ENCODE measurements at regions of chr1 and their contacts with region 1.

Region 1: DNA sequence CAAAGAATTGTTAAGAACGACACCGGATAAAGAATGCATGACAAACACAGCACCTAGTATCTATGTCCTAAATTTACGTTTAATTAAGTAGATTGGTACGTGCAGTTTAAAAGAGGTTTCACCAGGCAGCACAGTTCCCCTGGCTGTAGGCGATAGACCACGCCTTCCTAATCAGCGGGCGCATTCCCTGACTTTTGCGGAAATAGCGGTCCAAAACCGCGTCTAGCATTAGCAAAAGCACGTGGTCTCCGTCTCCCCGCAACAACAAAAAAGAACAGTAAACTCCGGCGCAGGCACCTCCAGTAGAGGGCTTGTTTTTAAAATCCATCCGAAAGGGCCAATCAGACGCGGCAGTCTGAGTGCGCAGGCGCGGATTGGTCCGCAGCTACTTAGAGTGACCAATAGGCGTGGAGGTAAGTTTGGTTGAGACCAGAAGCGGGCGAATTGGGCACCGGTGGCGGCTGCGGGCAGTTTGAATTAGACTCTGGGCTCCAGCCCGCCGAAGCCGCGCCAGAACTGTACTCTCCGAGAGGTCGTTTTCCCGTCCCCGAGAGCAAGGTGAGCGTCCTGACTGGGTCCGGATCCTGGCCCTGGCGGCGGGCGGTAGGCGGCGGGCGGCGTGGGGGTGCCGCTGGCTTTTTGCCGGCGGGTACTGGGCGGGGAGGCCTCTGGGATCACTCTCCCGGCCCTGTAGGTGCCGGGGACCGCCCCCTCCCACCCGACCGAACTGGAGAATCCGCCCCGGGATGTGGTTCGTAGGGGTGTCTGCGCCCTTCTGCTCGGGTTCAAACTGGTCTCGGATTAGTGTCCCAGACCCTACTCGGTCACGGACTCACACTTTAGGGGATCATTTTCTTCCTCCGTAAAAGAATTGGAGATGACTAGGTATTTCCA is at the start of gene CENPF:
- DNase-seq: peak; percentile 94
- H3K4me3 Mint-ChIP-seq: peak within 1 kb of the TSS; percentile 93
- H3K27ac Mint-ChIP-seq: peak within 1 kb of the TSS; percentile 94
- H3K4me1 Mint-ChIP-seq: peaks cover 17% of the 10 kb centered on the region
- H3K27me3 Mint-ChIP-seq: no peaks in the 10 kb centered on the region
- total RNA-seq, gene CENPF: 51.7 and 52.3 TPM in 2 replicates

Region 2: GRCh38 chr1:214213136-214213535 is 389.9 kb before region 1 on chr1:
- intact Hi-C with region 1: loop called (anchors 5 kb)
- DNase-seq: no peak
- H3K4me3 Mint-ChIP-seq: no peak overlapping the region
- H3K27ac Mint-ChIP-seq: no peak overlapping the region
- H3K4me1 Mint-ChIP-seq: no peaks in the 10 kb centered on the region
- H3K27me3 Mint-ChIP-seq: peaks cover 20% of the 10 kb centered on the region

Region 3: GRCh38 chr1:214261206-214262123 is 341.5 kb before region 1 on chr1:
- intact Hi-C with region 1: loop called (anchors 5 kb)
- DNase-seq: peak; percentile 69
- H3K4me3 Mint-ChIP-seq: no peak overlapping the region
- H3K27ac Mint-ChIP-seq: no peak overlapping the region
- H3K4me1 Mint-ChIP-seq: peaks cover 27% of the 10 kb centered on the region
- H3K27me3 Mint-ChIP-seq: peaks cover 42% of the 10 kb centered on the region

Region 4: DNA sequence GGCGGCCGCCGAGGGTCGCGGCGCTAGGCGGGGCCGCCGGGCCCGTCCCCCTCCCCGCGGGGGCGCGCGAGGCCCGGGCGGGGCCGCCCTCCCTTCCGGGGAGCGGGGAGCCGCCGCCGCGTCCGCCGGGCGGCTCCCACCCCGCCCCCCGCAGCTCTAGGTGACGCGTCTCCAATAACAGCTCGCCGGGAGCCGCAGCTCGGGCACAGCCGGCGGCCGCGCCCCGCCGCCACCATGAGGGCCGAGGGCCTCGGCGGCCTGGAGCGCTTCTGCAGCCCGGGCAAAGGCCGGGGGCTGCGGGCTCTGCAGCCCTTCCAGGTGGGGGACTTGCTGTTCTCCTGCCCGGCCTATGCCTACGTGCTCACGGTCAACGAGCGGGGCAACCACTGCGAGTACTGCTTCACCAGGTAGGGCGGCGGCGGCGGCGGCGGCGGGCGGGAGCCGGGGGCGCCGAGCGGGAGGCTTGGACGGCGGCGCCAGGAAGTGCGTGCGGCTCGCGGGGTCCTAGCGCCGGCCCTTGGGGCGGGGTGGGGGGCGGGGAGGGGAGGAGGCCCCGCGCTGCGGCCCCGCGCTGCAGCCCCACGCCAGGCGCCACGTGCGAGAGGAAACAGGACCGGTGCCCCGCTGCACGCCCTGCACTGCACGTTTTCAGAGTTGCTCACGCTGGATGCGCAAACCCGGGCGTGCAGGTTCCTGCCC is 321.8 kb before region 1 on chr1 and contains the start of gene SMYD2:
- intact Hi-C with region 1: loop called (anchors 1 kb)
- DNase-seq: peak; percentile 59
- H3K4me3 Mint-ChIP-seq: peak within 1 kb of the TSS; percentile 94
- H3K27ac Mint-ChIP-seq: peak within 1 kb of the TSS; percentile 92
- H3K4me1 Mint-ChIP-seq: peaks cover 42% of the 10 kb centered on the region
- H3K27me3 Mint-ChIP-seq: peaks cover 2% of the 10 kb centered on the region
- total RNA-seq, gene SMYD2: 25.7 and 26.8 TPM in 2 replicates

Region 5: DNA sequence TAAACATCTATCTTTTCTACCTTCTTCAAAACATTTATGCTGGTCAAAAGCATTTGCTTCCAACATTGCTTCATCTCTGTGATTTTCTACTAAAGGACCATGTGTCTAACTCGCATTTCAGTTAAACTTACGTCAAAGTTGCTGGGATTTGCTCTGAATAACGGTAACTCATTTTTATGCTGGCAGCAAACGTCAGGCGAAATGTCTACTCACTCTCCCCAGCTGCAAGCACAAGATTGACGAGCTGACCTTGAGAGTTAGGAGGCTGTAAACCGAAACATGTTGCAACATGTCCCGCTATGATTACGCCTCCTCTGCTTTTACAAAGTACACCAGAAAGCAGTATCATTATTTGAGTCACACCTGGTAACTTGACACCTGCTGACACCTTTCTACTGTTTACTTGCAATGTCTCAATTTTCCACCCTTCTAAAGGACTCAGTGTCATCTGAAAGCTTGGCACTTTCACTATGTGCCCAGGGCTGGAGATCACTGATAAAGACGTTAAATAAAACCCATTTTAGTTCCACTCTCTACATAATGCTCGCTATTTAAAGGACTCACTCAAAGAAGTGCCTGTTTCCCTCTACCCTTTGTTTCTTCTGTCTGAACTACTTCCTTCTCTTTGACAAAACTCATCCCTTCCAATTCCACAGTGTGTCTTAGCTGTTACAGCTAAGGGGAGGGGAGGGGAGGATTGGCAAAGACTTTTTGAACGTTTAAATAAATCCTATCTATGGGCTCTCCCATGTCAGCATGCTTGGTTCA is 163.5 kb before region 1 on chr1:
- intact Hi-C with region 1: loop called (anchors 1 kb)
- DNase-seq: peak; percentile 52
- H3K4me3 Mint-ChIP-seq: peak overlapping the region; percentile 66
- H3K27ac Mint-ChIP-seq: peak overlapping the region; percentile 95
- H3K4me1 Mint-ChIP-seq: peaks cover 64% of the 10 kb centered on the region
- H3K27me3 Mint-ChIP-seq: no peaks in the 10 kb centered on the region

Region 6: DNA sequence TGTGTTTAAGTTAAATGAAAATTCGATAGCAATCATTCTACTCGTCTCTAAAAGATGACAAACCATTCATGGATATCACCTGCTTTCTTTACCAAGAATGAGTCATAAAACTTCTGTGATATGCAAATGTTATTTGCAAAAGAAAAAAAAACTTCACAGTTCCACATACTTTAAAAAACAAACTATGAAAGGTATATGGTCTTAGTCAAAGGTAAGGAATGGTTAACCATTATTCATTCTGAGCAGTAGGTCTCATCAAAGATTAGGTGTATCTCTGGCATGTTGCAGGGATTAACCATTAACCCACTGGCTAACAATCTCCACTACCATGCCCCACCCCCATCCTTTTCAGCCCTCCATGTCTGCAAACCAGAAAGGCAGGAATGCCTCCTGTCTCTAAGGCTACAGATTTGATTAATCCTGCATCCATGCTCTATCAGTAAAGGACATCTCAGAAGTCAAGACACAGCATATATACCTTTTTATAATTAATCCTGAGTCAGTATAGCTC is 96.0 kb before region 1 on chr1:
- intact Hi-C with region 1: no loop called
- DNase-seq: no peak
- H3K4me3 Mint-ChIP-seq: no peak overlapping the region
- H3K27ac Mint-ChIP-seq: no peak overlapping the region
- H3K4me1 Mint-ChIP-seq: peaks cover 10% of the 10 kb centered on the region
- H3K27me3 Mint-ChIP-seq: peaks cover 4% of the 10 kb centered on the region

Region 7: GRCh38 chr1:214584805-214585766 is 17.9 kb before region 1 on chr1:
- intact Hi-C with region 1: loop called (anchors 1 kb)
- DNase-seq: no peak
- H3K4me3 Mint-ChIP-seq: no peak overlapping the region
- H3K27ac Mint-ChIP-seq: no peak overlapping the region
- H3K4me1 Mint-ChIP-seq: peaks cover 10% of the 10 kb centered on the region
- H3K27me3 Mint-ChIP-seq: peaks cover 3% of the 10 kb centered on the region

Region 8: GRCh38 chr1:214615871-214616270 is 12.9 kb after region 1 on chr1:
- intact Hi-C with region 1: loop called (anchors 2 kb)
- DNase-seq: no peak
- H3K4me3 Mint-ChIP-seq: no peak overlapping the region
- H3K27ac Mint-ChIP-seq: no peak overlapping the region
- H3K4me1 Mint-ChIP-seq: peaks cover 47% of the 10 kb centered on the region
- H3K27me3 Mint-ChIP-seq: no peaks in the 10 kb centered on the region

Region 9: DNA sequence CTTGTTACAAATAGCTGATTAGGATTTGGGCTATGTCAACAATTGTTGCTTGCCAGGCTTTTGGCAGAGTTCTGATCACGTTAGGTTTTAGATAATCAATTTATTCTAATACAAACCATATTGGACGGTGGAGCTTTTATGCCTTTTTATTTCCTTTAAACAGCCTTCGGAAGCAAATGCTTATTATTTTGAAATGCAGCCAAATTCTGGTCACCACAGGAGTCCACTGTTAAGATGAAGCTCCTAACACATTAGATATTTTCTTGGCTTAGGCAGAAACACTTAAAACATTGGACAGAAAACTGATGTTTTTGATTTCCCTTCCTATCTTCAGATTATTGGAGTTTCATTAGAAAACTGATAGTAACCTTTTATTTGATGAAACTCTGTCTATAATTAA is 82.9 kb after region 1 on chr1:
- intact Hi-C with region 1: no loop called
- DNase-seq: no peak
- H3K4me3 Mint-ChIP-seq: no peak overlapping the region
- H3K27ac Mint-ChIP-seq: no peak overlapping the region
- H3K4me1 Mint-ChIP-seq: no peaks in the 10 kb centered on the region
- H3K27me3 Mint-ChIP-seq: peaks cover 3% of the 10 kb centered on the region